Lower leg skin (tissue), 4 donors: ENCODE measurements at regions of chr5 and their contacts with region 1.

Region 1: GRCh38 chr5:141992349-141992963 is 20.4 kb downstream of the GNPDA1 start:
- DNase-seq: peak; percentile 69 to 90
- H3K4me3 ChIP-seq: no peak overlapping the region
- CTCF ChIP-seq: peak in 1 of 3 donors; percentile 10
- POLR2A ChIP-seq: no peak

Region 2: DNA sequence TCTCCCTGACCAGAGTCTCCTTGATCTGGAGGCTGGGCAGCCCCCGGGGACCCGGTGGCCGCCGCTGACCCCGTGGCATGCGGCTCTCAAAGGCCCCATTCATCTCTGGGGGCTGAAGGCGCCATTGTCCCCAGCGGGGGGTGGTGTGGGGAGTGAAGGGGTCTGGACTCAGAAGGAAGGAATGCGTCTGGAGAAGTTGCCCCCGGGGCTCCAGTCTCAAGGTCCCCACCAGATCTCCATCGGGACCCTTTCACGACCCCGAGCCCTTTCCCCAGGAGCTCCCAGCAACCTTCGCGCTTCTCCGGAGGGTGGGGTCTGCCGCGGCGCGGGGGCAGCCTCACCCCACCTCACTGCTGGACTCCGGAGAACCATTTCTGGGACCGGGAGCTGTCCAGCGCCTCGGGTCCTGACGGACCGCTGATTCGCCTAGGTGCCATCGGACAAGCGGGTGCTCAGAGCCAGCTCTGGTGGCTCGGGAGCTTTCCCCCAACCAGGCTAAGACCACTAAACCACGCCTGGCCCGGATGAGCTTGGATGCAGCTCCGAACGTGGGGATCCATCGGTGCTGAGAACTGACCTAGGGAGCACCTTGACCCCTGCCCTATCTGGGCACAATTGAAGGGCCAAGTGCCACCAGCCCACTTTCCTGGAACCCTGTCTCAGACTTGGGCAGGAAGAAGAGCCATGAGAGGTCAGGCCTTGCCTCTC is 109.1 kb before region 1 on chr5:
- intact Hi-C with region 1: no loop called
- DNase-seq: peak in 1 of 2 donors; percentile 81
- H3K4me3 ChIP-seq: no peak overlapping the region
- CTCF ChIP-seq: no peak
- POLR2A ChIP-seq: no peak

Region 3: GRCh38 chr5:142145106-142145900 is 152.8 kb after region 1 on chr5:
- intact Hi-C with region 1: loop called (anchors 5 kb)
- DNase-seq: peak in 1 of 2 donors; percentile 62
- H3K4me3 ChIP-seq: no peak overlapping the region
- CTCF ChIP-seq: peak in 1 of 3 donors; percentile 40
- POLR2A ChIP-seq: no peak

Region 4: DNA sequence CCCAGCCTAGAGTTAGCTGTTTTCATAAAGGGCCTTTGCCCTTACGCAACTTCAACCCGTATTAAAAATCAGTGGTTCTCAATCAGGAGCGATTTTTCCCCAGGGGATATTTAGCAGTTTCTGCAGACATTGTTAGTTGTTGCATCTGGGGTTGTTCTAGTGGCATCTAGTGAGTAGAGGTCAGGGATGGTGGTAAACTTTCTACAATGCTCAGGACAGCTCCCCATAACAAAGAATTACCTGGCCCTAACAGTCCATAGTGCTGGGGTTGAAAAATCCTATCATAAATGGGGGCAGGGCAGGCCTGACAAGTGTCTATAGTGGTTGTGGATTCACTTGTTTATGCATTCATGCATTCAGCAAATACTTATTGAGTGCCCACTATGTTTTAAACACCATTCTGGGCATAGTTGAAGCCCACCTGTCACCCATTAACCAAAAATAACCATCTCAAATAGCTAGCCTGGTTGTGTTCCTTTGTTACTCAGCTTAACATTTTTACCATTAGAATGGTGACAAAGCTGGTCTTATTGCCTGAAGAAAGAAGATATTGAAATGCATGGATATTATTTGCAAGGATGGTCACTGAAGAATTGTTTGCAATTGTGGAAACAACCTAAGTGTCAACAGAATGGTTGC is 709.3 kb after region 1 on chr5:
- intact Hi-C with region 1: no loop called
- DNase-seq: no peak
- H3K4me3 ChIP-seq: no peak overlapping the region
- CTCF ChIP-seq: no peak
- POLR2A ChIP-seq: no peak